ENCODE measurements at regions of chr12 and their contacts with region 1.

Region 1: GRCh38 chr12:127526925-127527324 is 740.0 kb upstream of the TMEM132C start:
- DNase-seq: no peak
- H3K4me3 ChIP-seq: no peak overlapping the region
- H3K27ac ChIP-seq: no peak overlapping the region
- H3K4me1 ChIP-seq: no peaks in the 10 kb centered on the region
- H3K27me3 ChIP-seq: no peaks in the 10 kb centered on the region
- CTCF ChIP-seq: no peak
- EP300 ChIP-seq: no peak
- POLR2A ChIP-seq: no peak

Region 2: DNA sequence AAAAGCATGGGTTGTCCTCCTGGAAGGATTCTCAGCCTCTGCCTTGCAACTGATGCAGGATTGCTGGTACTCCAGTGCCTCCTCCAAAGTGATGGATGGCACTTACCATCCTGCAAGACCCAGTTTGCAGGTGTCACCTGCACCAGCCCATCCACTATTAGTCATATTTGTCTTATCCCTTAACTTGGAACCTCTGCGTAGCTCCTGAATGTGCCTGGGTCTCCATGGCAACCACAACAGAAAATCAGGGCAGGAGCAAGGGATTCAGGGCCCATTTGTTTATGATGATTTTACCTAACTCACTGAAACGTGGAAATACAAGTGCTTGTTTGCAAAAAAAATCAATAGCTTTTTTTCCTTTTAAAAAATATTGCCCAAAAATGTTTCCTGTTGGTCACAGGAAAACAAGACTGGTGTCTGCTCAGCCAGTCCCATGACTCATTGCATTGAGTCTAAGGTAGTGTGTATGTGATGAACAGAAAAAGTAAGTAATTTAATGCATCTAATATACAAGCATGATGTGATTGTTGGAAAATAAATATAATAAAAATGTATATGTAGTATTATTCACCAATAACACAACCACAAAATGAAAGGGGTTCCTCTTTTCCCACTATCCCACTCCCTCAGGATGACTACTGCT is 456.3 kb before region 1 on chr12:
- in situ Hi-C with region 1: no loop called
- intact Hi-C with region 1: no loop called
- DNase-seq: no peak
- H3K4me3 ChIP-seq: no peak overlapping the region
- H3K27ac ChIP-seq: no peak overlapping the region
- H3K4me1 ChIP-seq: no peaks in the 10 kb centered on the region
- H3K27me3 ChIP-seq: no peaks in the 10 kb centered on the region
- CTCF ChIP-seq: no peak
- EP300 ChIP-seq: no peak
- POLR2A ChIP-seq: no peak

Region 3: DNA sequence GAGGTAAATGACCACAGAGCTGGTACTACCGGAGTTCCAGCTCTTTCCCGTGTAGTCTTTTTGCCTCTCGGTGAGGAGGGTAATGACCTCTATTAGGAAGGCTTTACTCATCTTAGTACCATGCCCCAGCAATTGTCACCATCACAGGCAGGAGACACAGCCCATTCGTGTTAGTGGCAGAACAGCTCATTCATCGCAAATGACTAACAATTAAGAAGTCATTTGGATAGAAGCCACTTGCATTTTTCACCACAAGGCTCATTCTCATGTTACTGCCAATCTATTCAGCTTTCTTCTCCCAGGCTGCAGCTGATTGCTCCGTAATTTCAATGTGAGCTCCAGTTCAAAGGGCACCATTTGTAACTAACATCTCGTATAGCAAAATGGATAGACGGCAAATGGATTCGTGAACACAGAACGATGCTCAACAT is 21.2 kb after region 1 on chr12:
- in situ Hi-C with region 1: no loop called
- intact Hi-C with region 1: loop called (anchors 1 kb)
- DNase-seq: no peak
- H3K4me3 ChIP-seq: no peak overlapping the region
- H3K27ac ChIP-seq: no peak overlapping the region
- H3K4me1 ChIP-seq: no peaks in the 10 kb centered on the region
- H3K27me3 ChIP-seq: no peaks in the 10 kb centered on the region
- CTCF ChIP-seq: no peak
- EP300 ChIP-seq: no peak
- POLR2A ChIP-seq: no peak